ENCODE measurements at regions of chr14 and their contacts with region 1.

Region 1: GRCh38 chr14:71720978-71721624 is 211.1 kb upstream of the RGS6 start:
- DNase-seq: peak; percentile 14
- H3K4me3 ChIP-seq: no peak overlapping the region
- H3K27ac ChIP-seq: no peak overlapping the region
- H3K4me1 ChIP-seq: no peaks in the 10 kb centered on the region
- H3K27me3 ChIP-seq: no peaks in the 10 kb centered on the region
- CTCF ChIP-seq: peak in 4 of 5 experiments; percentile 29 to 45 (median 35)
- EP300 ChIP-seq: no peak
- POLR2A ChIP-seq: no peak

Region 2: DNA sequence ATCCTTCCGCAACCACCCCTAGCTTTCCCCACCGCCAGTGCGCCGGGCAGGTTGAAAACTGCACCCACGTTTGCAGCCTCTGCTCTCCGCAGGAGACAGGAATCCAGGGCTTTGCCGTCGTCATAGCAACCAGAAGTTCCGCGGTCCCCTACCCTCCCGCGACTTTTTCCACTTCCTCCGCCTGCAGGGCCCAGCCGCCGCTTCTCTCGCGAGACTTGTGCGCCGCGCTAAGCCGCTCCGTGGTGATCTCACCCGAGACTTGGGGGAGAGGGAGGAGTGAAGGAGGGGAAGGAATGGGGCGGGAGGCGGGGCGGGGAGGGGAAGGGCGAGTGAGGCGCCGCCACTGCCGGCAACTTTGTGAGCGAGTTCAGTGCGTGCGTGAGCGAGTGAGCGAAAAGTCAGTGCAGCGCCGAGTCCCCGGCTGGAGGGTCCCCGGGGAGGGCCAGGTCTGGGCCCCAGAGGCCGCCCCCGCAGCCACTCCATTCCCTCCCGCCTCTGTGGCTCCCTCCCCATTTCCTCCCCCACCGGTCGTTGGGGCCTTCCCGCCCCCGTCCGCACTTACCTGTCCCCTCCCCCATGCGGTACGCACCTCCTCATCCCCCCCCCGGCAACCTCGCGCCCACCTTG is 400.9 kb before region 1 on chr14:
- in situ Hi-C with region 1: loop called in 2 of 4 experiments (anchors 25 kb)
- intact Hi-C with region 1: no loop called
- DNase-seq: peak; percentile 98
- H3K4me3 ChIP-seq: peak within 1 kb of the TSS; percentile 75 to 98 (median 82)
- H3K27ac ChIP-seq: peak within 1 kb of the TSS; percentile 95 to 98 (median 98)
- H3K4me1 ChIP-seq: peaks cover 5 to 39% (median 22%) of the 10 kb centered on the region in 4 donors
- H3K27me3 ChIP-seq: no peaks in the 10 kb centered on the region
- CTCF ChIP-seq: peak in 1 of 5 experiments; percentile 19
- EP300 ChIP-seq: no peak
- POLR2A ChIP-seq: peak; percentile 95

Region 3: GRCh38 chr14:71675126-71675899 is 45.8 kb before region 1 on chr14:
- in situ Hi-C with region 1: no loop called
- intact Hi-C with region 1: loop called (anchors 1 kb)
- DNase-seq: no peak
- H3K4me3 ChIP-seq: no peak overlapping the region
- H3K27ac ChIP-seq: no peak overlapping the region
- H3K4me1 ChIP-seq: no peaks in the 10 kb centered on the region
- H3K27me3 ChIP-seq: no peaks in the 10 kb centered on the region
- CTCF ChIP-seq: no peak
- EP300 ChIP-seq: no peak
- POLR2A ChIP-seq: no peak

Measured in transverse colon (tissue), 4 donors.